Thyroid gland (tissue), 4 donors: ENCODE measurements at regions of chr12 and their contacts with region 1.

Region 1: DNA sequence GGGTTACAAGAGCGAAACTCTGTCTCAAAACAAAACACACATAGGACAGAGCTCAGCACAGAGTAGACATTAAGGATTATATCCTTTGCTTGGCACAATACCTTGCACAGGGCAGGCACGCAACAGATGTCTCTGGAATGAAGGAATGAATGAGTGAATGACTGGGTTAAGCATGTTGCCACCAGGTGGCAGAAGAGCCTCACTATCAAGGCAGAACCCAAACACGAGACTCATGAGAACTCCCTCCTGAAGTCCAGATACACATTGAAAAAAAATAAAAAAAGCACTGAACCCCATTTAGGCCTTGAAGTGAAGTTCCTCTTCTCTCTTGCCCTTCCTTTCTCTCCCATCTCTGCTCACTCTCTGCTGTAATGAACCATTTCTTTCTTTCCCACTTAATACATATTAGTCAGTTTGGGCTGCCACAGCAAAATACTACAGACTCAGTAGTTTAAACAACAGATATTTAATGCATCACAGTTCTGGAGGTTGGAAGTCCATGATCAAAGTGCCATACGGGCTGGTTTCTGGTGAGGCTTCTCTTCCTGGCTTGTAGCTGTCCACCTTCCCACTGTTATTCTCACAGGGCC is 26.6 kb upstream of the LTA4H start:
- DNase-seq: peak; percentile 76 to 81
- H3K4me3 ChIP-seq: no peak overlapping the region
- H3K27ac ChIP-seq: no peak overlapping the region
- H3K4me1 ChIP-seq: no peaks in the 10 kb centered on the region
- H3K27me3 ChIP-seq: no peaks in the 10 kb centered on the region
- CTCF ChIP-seq: peak; percentile 23 to 98 (median 78)
- POLR2A ChIP-seq: no peak

Region 2: GRCh38 chr12:96219698-96220206 is 157.8 kb after region 1 on chr12:
- intact Hi-C with region 1: loop called (anchors 5 kb)
- DNase-seq: peak in 1 of 2 donors; percentile 32
- H3K4me3 ChIP-seq: no peak overlapping the region
- H3K27ac ChIP-seq: peak overlapping the region in 1 of 3 donors; percentile 37
- H3K4me1 ChIP-seq: peaks cover 7 to 17% of the 10 kb centered on the region in 2 donors
- H3K27me3 ChIP-seq: no peaks in the 10 kb centered on the region
- CTCF ChIP-seq: no peak
- POLR2A ChIP-seq: no peak

Region 3: GRCh38 chr12:96516472-96517430 is 454.8 kb after region 1 on chr12:
- intact Hi-C with region 1: loop called (anchors 5 kb)
- DNase-seq: peak; percentile 81 to 85
- H3K4me3 ChIP-seq: no peak overlapping the region
- H3K27ac ChIP-seq: no peak overlapping the region
- H3K4me1 ChIP-seq: peaks cover 0 to 19% of the 10 kb centered on the region in 2 donors
- H3K27me3 ChIP-seq: no peaks in the 10 kb centered on the region
- CTCF ChIP-seq: peak; percentile 19 to 90 (median 66)
- POLR2A ChIP-seq: no peak